Activated CD4-positive, alpha-beta memory T cell treated with anti-CD3 and anti-CD28 coated beads for 36 hours (primary cell): ENCODE measurements at regions of chr13 and their contacts with region 1.

Region 1: DNA sequence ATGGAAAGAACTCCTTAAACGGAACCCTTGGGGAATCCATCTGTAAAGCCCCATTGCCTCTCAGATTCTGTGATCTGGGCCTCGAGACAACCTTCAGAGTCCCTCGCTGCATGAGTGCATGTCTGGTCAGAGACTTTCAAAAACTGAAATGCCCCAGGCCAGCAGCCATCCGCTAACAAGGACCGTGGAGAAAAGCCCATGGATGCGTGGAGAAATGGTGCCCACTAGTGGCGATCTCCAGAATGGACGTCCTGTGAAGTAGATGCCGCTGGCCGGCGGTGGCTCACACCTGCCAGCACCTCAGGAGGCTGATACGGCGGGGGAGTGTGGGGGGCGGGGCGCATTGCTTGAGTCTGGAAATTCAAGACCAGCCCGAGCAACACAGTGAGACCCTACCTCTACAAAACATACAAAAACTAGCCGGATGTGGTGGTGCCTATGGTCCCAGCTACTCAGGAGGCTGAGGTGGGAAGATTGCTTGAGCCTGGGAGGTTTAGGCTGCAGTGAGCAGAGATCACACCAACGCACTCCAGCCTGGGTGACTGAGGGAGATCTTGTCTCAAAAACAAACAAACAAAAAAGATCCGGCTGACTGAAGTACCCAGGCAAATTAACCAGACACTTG is 7.9 kb upstream of the CDC16 start:
- DNase-seq: peak; percentile 93
- H3K4me3 Mint-ChIP-seq: peak overlapping the region; percentile 6
- H3K27ac Mint-ChIP-seq: peak overlapping the region; percentile 68
- H3K4me1 Mint-ChIP-seq: peaks cover 46% of the 10 kb centered on the region
- H3K27me3 Mint-ChIP-seq: peaks cover 3% of the 10 kb centered on the region

Region 2: DNA sequence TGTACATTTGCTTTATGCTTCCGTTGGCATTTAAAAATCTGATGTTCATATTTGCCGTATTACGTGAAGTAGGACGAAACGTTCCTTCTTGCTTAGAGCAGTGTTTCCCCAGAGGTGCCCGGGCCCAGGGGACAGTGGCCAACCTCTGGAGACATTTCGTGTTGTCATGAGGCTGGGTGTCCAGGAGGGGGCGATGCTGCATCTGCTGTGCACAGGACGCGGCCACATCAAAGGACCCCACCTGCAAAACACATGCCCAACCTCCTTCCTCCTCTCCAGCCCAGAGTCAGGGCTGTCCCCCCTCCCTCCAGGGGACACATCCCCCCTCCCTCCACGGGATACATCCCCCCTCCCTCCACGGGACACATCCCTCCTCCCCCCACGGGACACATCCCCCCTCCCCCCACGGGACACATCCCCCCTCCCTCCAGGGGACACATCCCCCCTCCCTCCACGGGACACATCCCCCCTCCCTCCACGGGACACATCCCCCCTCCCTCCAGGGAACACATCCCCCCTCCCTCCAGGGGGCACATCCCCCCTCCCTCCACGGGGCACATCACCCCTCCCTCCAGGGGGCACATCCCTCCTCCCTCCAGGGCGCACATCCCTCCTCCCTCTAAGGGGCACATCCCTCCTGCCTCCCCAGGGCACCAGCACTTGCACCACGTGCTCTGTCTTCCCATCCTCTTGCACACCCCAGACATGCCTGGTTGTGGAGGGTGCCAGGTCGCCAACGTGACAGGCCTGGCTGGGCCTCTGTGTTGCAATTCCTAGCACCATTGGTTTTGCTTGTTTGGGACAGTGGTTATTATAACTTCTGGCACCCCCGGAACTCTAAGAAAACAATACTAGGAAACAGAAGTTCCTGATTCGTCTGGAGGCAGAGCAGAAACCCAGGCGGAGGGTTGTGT is 409.6 kb before region 1 on chr13:
- CTCF ChIA-PET with region 1: interaction called, 3 read pairs
- POLR2A ChIA-PET with region 1: no interaction called
- intact Hi-C with region 1: loop called (anchors 1 kb)
- DNase-seq: peak; percentile 91
- H3K4me3 Mint-ChIP-seq: peak overlapping the region; percentile 92
- H3K27ac Mint-ChIP-seq: peak overlapping the region; percentile 51
- H3K4me1 Mint-ChIP-seq: peaks cover 19% of the 10 kb centered on the region
- H3K27me3 Mint-ChIP-seq: peaks cover 2% of the 10 kb centered on the region

Region 3: DNA sequence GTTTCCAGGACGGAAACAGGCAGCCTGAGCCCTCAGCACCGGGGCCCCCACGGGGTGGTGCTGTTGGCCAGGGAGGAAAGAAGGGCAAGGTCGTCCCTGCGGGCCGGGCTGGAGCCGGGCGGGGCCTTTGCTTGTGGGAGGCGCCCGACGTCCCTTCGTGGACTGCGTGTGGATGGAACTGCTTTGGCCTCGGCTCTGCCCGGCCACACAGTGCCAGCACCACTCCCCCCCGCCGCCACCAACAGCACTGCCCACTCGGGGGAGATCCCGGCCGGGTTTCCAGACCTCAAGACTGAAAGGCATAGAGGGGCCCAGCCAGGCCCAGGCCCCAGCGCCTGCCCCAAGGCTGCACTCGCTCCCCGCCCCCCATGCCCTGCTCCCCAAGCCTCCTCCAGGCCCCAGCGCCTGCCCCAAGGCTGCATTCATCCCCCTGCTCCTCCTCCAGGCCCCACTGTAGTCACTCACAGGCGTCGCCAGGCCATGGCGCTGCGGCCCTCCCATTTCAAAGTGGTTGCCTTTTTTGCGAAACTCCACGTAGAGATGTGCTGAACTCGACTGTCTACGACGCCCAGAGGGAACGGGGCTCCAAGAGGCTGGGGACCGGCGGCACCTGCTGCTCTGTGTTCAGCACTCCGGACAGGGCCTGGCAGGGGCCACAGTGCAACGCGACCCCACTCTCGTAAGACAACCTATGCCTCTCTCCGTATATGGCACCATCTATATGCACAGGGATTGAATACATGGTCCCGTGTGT is 275.4 kb before region 1 on chr13:
- CTCF ChIA-PET with region 1: no interaction called
- POLR2A ChIA-PET with region 1: no interaction called
- intact Hi-C with region 1: loop called (anchors 1 kb)
- DNase-seq: peak; percentile 79
- H3K4me3 Mint-ChIP-seq: no peak overlapping the region
- H3K27ac Mint-ChIP-seq: no peak overlapping the region
- H3K4me1 Mint-ChIP-seq: no peaks in the 10 kb centered on the region
- H3K27me3 Mint-ChIP-seq: no peaks in the 10 kb centered on the region

Region 4: GRCh38 chr13:114143806-114144605 is 82.8 kb before region 1 on chr13:
- CTCF ChIA-PET with region 1: interaction called, 6 read pairs
- POLR2A ChIA-PET with region 1: no interaction called
- intact Hi-C with region 1: loop called (anchors 5 kb)
- DNase-seq: peak; percentile 66
- H3K4me3 Mint-ChIP-seq: no peak overlapping the region
- H3K27ac Mint-ChIP-seq: no peak overlapping the region
- H3K4me1 Mint-ChIP-seq: peaks cover 13% of the 10 kb centered on the region
- H3K27me3 Mint-ChIP-seq: no peaks in the 10 kb centered on the region